WTC11 (cell line): ENCODE measurements at regions of chr10 and their contacts with region 1.

Region 1: DNA sequence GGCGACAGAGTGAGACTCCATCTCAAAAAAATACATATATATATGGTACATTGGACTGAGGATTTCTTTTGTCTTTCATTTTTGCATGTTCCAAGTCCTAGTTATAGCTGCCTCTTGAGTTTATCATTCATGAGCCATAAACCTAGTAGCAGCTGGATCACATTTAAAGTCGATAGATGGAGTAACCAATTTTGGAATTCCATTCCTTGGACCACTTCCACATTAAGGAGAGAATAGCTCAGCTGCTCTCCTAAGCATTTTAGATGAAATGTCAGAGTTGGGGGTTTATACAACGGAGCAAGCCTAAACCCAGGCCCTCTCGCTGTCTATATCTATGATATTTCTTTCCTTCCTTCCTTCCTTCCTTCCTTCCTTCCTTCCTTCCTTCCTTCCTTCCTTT is 141.2 kb downstream of the LYZL1 start:
- DNase-seq: no peak
- ATAC-seq: no peak
- H3K4me3 Mint-ChIP-seq: no peak overlapping the region
- H3K27ac Mint-ChIP-seq: no peak overlapping the region
- H3K4me1 Mint-ChIP-seq: no peaks in the 10 kb centered on the region
- H3K27me3 Mint-ChIP-seq: peaks cover 3% of the 10 kb centered on the region; the same call in 1 of the 2 replicates
- CTCF ChIP-seq: no peak

Region 2: GRCh38 chr10:29370097-29371092 is 59.7 kb before region 1 on chr10:
- CTCF ChIA-PET with region 1: no interaction called
- POLR2A ChIA-PET with region 1: no interaction called
- DNase-seq: no peak
- ATAC-seq: no peak
- H3K4me3 Mint-ChIP-seq: no peak overlapping the region
- H3K27ac Mint-ChIP-seq: no peak overlapping the region
- H3K4me1 Mint-ChIP-seq: no peaks in the 10 kb centered on the region
- H3K27me3 Mint-ChIP-seq: peaks cover 3% of the 10 kb centered on the region; the same call in 1 of the 2 replicates
- CTCF ChIP-seq: no peak

Region 3: DNA sequence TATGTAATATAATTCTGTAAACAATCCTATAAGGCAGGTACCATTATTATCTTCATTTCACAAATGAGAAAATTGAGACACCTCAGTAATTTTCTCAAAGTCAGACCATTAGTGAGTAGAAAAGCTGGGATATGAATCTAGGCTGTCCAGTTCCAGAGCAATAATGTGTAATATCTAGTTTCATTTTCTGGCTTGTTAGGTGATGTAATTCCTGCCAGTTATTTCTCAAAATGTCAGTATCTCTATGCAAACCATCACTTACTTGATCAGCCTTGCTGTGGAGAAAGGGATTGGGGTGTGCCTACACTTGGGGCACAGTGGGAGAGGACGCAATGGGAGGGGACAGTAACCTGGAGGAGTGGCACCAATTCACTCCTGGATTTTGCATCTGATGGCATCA is 16.2 kb after region 1 on chr10:
- CTCF ChIA-PET with region 1: interaction called, 15 read pairs
- POLR2A ChIA-PET with region 1: no interaction called
- DNase-seq: no peak
- ATAC-seq: no peak
- H3K4me3 Mint-ChIP-seq: no peak overlapping the region
- H3K27ac Mint-ChIP-seq: no peak overlapping the region
- H3K4me1 Mint-ChIP-seq: peaks cover 32% of the 10 kb centered on the region
- H3K27me3 Mint-ChIP-seq: no peaks in the 10 kb centered on the region
- CTCF ChIP-seq: no peak

Region 4: GRCh38 chr10:29470355-29470705 is 40.2 kb after region 1 on chr10:
- CTCF ChIA-PET with region 1: interaction called, 11 read pairs
- POLR2A ChIA-PET with region 1: no interaction called
- DNase-seq: peak; percentile 79
- ATAC-seq: peak; percentile 87
- H3K4me3 Mint-ChIP-seq: no peak overlapping the region
- H3K27ac Mint-ChIP-seq: 0 out of 2 replicates have a peak overlapping the region, but pooled peaks have one; percentile 1
- H3K4me1 Mint-ChIP-seq: peaks cover 28% of the 10 kb centered on the region
- H3K27me3 Mint-ChIP-seq: no peaks in the 10 kb centered on the region
- CTCF ChIP-seq: peak; percentile 56

Region 5: GRCh38 chr10:29608062-29608461 is 178.0 kb after region 1 on chr10:
- CTCF ChIA-PET with region 1: no interaction called
- POLR2A ChIA-PET with region 1: no interaction called
- DNase-seq: no peak
- ATAC-seq: peak; percentile 80
- H3K4me3 Mint-ChIP-seq: no peak overlapping the region
- H3K27ac Mint-ChIP-seq: no peak overlapping the region
- H3K4me1 Mint-ChIP-seq: peaks cover 20% of the 10 kb centered on the region
- H3K27me3 Mint-ChIP-seq: no peaks in the 10 kb centered on the region
- CTCF ChIP-seq: no peak